Activated B cell treated with CpG ODN at 0.5 μM for 24 hours (primary cell): ENCODE measurements at regions of chr4 and their contacts with region 1.

Region 1: GRCh38 chr4:8468746-8469535 is 28.4 kb downstream of the TRMT44 start:
- DNase-seq: peak; percentile 26
- ATAC-seq: peak; percentile 81
- H3K4me3 Mint-ChIP-seq: no peak overlapping the region
- H3K27ac Mint-ChIP-seq: no peak overlapping the region
- H3K4me1 Mint-ChIP-seq: peaks cover 4% of the 10 kb centered on the region
- H3K27me3 Mint-ChIP-seq: no peaks in the 10 kb centered on the region
- CTCF ChIP-seq: no peak

Region 2: GRCh38 chr4:7691982-7692381 is 777.0 kb before region 1 on chr4:
- CTCF ChIA-PET with region 1: no interaction called
- POLR2A ChIA-PET with region 1: no interaction called
- intact Hi-C with region 1: no loop called
- DNase-seq: no peak
- ATAC-seq: no peak
- H3K4me3 Mint-ChIP-seq: no peak overlapping the region
- H3K27ac Mint-ChIP-seq: no peak overlapping the region
- H3K4me1 Mint-ChIP-seq: no peaks in the 10 kb centered on the region
- H3K27me3 Mint-ChIP-seq: no peaks in the 10 kb centered on the region
- CTCF ChIP-seq: no peak

Region 3: GRCh38 chr4:8594097-8595038 is 125.4 kb after region 1 on chr4:
- CTCF ChIA-PET with region 1: no interaction called
- POLR2A ChIA-PET with region 1: no interaction called
- intact Hi-C with region 1: loop called (anchors 1 kb)
- DNase-seq: no peak
- ATAC-seq: no peak
- H3K4me3 Mint-ChIP-seq: no peak overlapping the region
- H3K27ac Mint-ChIP-seq: no peak overlapping the region
- H3K4me1 Mint-ChIP-seq: no peaks in the 10 kb centered on the region
- H3K27me3 Mint-ChIP-seq: peaks cover 25% of the 10 kb centered on the region
- CTCF ChIP-seq: no peak

Region 4: GRCh38 chr4:8777320-8778196 is 308.6 kb after region 1 on chr4:
- CTCF ChIA-PET with region 1: no interaction called
- POLR2A ChIA-PET with region 1: no interaction called
- intact Hi-C with region 1: no loop called
- DNase-seq: no peak
- ATAC-seq: no peak
- H3K4me3 Mint-ChIP-seq: no peak overlapping the region
- H3K27ac Mint-ChIP-seq: no peak overlapping the region
- H3K4me1 Mint-ChIP-seq: no peaks in the 10 kb centered on the region
- H3K27me3 Mint-ChIP-seq: no peaks in the 10 kb centered on the region
- CTCF ChIP-seq: no peak